CD8-positive, alpha-beta T cell (primary cell): ENCODE measurements at regions of chr15 and their contacts with region 1.

Region 1: GRCh38 chr15:71386448-71387236 is 271.4 kb downstream of the THSD4 start:
- DNase-seq: peak in 2 of 9 experiments; percentile 13 to 19
- ATAC-seq: no peak
- H3K4me3 ChIP-seq: no peak overlapping the region
- H3K4me3 Mint-ChIP-seq: no peak overlapping the region
- H3K27ac ChIP-seq: no peak overlapping the region
- H3K27ac Mint-ChIP-seq: no peak overlapping the region
- H3K4me1 ChIP-seq: no peaks in the 10 kb centered on the region
- H3K4me1 Mint-ChIP-seq: peaks cover 2% of the 10 kb centered on the region
- H3K27me3 ChIP-seq: no peaks in the 10 kb centered on the region
- H3K27me3 Mint-ChIP-seq: peaks cover 14% of the 10 kb centered on the region
- CTCF ChIP-seq: peak; percentile 36

Region 2: GRCh38 chr15:71374607-71375352 is 11.9 kb before region 1 on chr15:
- CTCF ChIA-PET with region 1: interaction called, 11 read pairs
- POLR2A ChIA-PET with region 1: no interaction called
- intact Hi-C with region 1: no loop called
- DNase-seq: no peak
- ATAC-seq: no peak
- H3K4me3 ChIP-seq: no peak overlapping the region
- H3K4me3 Mint-ChIP-seq: no peak overlapping the region
- H3K27ac ChIP-seq: no peak overlapping the region
- H3K27ac Mint-ChIP-seq: no peak overlapping the region
- H3K4me1 ChIP-seq: peaks cover 17% of the 10 kb centered on the region
- H3K4me1 Mint-ChIP-seq: peaks cover 23% of the 10 kb centered on the region
- H3K27me3 ChIP-seq: no peaks in the 10 kb centered on the region
- H3K27me3 Mint-ChIP-seq: no peaks in the 10 kb centered on the region
- CTCF ChIP-seq: no peak

Region 3: DNA sequence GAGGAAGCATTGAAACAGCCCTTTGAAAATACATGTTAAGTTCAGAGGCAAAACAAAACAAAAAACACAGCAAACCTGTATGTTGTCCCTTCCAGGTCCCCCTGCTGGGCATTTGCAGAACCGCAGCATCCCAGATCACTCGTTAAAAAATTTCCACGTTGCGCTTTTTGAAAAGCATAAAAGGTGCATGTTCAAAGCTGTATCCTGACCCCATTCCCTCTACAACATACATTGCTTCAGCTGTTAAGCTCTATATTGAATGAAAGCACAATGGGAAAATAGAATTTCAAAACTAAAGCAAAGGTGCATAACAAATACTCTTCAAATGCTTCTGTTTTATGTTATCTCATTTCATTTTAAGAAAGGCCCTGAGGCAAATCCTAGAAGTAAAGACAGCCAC is 56.9 kb after region 1 on chr15:
- CTCF ChIA-PET with region 1: interaction called, 20 read pairs
- POLR2A ChIA-PET with region 1: no interaction called
- intact Hi-C with region 1: loop called (anchors 2 kb)
- DNase-seq: peak in 5 of 9 experiments; percentile 7 to 28 (median 22)
- ATAC-seq: no peak
- H3K4me3 ChIP-seq: no peak overlapping the region
- H3K4me3 Mint-ChIP-seq: no peak overlapping the region
- H3K27ac ChIP-seq: no peak overlapping the region
- H3K27ac Mint-ChIP-seq: no peak overlapping the region
- H3K4me1 ChIP-seq: no peaks in the 10 kb centered on the region
- H3K4me1 Mint-ChIP-seq: no peaks in the 10 kb centered on the region
- H3K27me3 ChIP-seq: no peaks in the 10 kb centered on the region
- H3K27me3 Mint-ChIP-seq: peaks cover 8% of the 10 kb centered on the region
- CTCF ChIP-seq: peak; percentile 73

Region 4: DNA sequence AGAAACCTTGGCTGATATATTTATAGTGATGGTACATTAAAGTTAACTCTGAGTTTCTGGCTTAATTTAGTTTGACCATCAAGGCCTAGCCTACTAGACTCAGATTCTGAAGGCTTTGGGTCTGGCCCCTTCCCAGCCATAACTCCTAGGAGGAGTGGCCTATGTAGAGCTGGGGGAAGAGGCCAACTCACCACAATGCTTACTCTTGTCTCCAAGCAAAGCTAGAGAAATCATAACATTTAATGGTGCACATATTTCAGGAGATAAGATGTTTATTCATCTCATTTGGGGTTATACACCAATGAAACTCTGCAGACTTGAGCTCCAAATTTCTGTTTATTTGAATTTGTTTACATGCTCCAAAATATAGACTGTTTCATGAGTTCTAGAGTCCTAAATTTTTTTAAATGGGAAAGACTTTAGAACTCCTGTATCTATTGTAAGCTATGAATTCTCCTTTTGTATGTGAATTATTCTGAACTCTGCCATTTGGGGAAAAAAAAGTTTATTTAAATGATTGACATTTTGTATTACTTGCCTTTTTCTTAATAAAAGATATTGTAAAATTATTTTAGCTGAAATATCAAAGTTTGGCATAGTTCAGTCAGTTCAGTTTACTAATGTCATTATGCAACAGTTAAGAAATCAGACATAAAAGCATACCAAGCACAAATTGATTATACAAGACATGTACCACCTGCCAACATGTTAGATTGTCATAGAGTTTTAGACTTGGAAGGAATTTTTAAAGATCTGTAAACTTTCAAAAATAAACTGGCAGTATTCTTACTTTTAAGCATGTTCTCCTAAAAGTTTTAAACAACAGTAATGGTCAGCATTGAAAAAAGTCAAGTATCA is 280.4 kb after region 1 on chr15:
- CTCF ChIA-PET with region 1: no interaction called
- POLR2A ChIA-PET with region 1: no interaction called
- intact Hi-C with region 1: no loop called
- DNase-seq: no peak
- ATAC-seq: no peak
- H3K4me3 ChIP-seq: no peak overlapping the region
- H3K4me3 Mint-ChIP-seq: no peak overlapping the region
- H3K27ac ChIP-seq: no peak overlapping the region
- H3K27ac Mint-ChIP-seq: no peak overlapping the region
- H3K4me1 ChIP-seq: no peaks in the 10 kb centered on the region
- H3K4me1 Mint-ChIP-seq: no peaks in the 10 kb centered on the region
- H3K27me3 ChIP-seq: no peaks in the 10 kb centered on the region
- H3K27me3 Mint-ChIP-seq: peaks cover 8% of the 10 kb centered on the region
- CTCF ChIP-seq: no peak

Region 5: GRCh38 chr15:71730277-71731144 is 343.9 kb after region 1 on chr15:
- CTCF ChIA-PET with region 1: interaction called, 4 read pairs
- POLR2A ChIA-PET with region 1: no interaction called
- intact Hi-C with region 1: loop called (anchors 5 to 10 kb)
- DNase-seq: peak in 3 of 9 experiments; percentile 8 to 46 (median 36)
- ATAC-seq: no peak
- H3K4me3 ChIP-seq: no peak overlapping the region
- H3K4me3 Mint-ChIP-seq: no peak overlapping the region
- H3K27ac ChIP-seq: no peak overlapping the region
- H3K27ac Mint-ChIP-seq: no peak overlapping the region
- H3K4me1 ChIP-seq: no peaks in the 10 kb centered on the region
- H3K4me1 Mint-ChIP-seq: no peaks in the 10 kb centered on the region
- H3K27me3 ChIP-seq: no peaks in the 10 kb centered on the region
- H3K27me3 Mint-ChIP-seq: peaks cover 15% of the 10 kb centered on the region
- CTCF ChIP-seq: peak; percentile 58